ENCODE measurements at regions of chr12 and their contacts with region 1.

Region 1: GRCh38 chr12:57583008-57583831 is 7.8 kb upstream of the PIP4K2C start:
- DNase-seq: no peak

Region 2: DNA sequence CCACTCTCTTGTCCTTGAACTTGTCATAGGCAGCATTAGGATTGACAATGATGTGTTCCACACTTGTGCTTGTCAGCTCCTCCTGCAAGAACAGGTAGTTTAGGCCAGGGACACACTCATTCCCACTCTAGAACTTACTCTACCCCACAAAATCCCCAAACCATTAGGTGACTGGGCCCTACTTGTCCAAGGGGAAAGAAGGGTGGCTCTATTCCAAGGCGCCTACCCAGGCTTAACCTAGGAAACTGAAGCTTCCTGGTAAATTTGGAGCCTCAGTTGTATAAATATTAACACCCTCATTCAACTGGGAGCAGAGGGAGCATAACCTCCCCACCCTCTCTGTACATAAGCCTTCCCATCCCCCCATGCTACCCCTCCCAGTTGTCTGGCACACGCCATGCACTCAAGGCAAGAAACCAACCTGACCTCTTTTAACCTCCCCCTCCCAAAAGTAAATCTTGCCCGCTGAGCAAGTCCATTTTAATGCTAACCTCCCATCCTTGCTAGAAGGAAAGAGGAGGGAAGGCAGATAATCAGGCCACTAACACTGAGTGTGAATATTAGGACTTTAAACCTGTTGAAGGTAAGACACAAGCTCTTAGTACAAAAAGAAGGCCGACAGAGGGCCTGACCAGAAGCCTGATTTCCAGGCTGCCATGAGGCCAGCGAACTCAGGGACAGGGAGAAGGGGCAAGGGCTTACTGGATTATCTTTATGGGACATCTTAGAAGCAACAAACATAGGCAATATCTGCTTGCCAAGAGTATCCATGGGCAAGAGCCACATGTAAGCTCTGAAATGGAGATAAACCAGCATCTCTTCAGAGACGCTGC is 47.2 kb before region 1 on chr12:
- intact Hi-C with region 1: no loop called
- DNase-seq: no peak

Region 3: DNA sequence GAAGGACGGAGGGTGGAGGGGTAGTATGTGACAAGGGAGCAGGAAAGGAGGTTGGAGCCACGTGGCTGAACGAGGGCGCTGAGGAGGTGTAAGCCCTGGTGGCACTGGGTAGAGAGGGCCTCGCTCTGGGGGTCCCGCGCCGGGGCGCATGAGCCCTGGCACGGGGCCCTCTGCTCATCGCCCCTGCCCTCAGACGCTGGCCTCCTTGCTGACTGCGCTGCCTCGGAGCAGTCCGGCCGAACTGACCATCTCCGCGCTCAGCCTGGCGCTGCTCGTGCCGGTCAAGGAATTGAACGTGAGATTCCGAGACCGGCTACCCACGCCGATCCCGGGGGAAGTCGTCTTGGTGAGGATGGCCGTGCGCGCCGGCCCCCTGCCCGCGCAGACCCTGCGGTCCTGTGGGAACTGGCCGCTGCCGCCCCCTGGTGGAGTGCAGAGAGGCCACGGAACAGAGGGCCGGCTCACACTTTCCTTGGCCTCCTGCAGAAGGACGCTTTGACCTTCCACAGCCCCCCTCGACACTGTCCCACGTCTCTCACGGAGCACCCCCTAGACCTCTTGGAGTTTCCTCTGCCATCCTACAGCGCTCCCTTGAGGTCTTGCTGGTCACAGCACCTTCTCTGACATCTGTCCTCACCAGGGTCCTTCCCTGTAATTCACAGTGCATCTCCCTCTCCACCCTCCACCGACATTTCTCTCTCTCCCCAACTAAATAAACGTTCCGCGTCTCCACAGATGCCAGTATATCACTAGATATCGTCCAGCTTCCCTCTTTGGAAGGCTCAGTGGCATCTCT is 38.5 kb after region 1 on chr12:
- intact Hi-C with region 1: loop called (anchors 1 kb)
- DNase-seq: peak; percentile 81

Region 4: DNA sequence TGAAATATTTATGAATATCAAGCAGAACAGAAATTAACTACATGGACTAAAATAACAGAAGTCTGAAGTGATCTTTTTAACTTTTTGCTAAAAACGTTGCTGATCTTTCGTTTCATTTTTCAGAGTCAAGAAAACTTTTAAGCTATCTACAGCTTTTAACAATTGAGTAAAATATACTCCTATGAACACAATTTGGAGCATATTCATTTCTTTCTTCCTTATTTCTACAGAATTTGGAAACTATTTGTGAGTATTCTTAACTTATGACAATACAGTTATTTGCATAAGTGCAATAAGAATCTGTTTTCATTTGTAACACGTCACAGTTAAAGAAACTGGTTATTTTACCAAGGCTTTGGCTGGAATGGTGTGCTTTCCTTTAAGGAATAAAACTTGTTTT is 70.8 kb after region 1 on chr12:
- intact Hi-C with region 1: no loop called
- DNase-seq: no peak